ENCODE measurements at regions of chr1 and their contacts with region 1.

Region 1: GRCh38 chr1:75785983-75786853 is at the start of gene RABGGTB:
- DNase-seq: peak; percentile 91 to 97
- H3K4me3 ChIP-seq: peak within 1 kb of the TSS; percentile 78 to 95 (median 86)
- H3K27ac ChIP-seq: peak within 1 kb of the TSS; percentile 70; the same call in 1 of the 2 replicates
- H3K4me1 ChIP-seq: peaks cover 0 to 3% (median 2%) of the 10 kb centered on the region in 4 experiments; a peak in 2 of 7 replicates
- H3K27me3 ChIP-seq: no peaks in the 10 kb centered on the region
- CTCF ChIP-seq: no peak
- EP300 ChIP-seq: no peak
- POLR2A ChIP-seq: peak; percentile 99
- RAD21 ChIP-seq: peak; percentile 11 to 17; a peak in 2 of 4 replicates
- total RNA-seq, gene RABGGTB: 117 and 124 TPM in 2 replicates

Region 2: GRCh38 chr1:75615613-75616435 is 170.4 kb before region 1 on chr1:
- CTCF ChIA-PET with region 1: interaction called, 4 read pairs
- POLR2A ChIA-PET with region 1: interaction called, 17 read pairs
- DNase-seq: peak in 1 of 2 experiments; percentile 73
- H3K4me3 ChIP-seq: peak overlapping the region; percentile 70 to 80 (median 80)
- H3K27ac ChIP-seq: no peak overlapping the region
- H3K4me1 ChIP-seq: peaks cover 0 to 9% (median 0%) of the 10 kb centered on the region in 4 experiments; a peak in 2 of 7 replicates
- H3K27me3 ChIP-seq: peaks cover 0 to 46% (median 32%) of the 10 kb centered on the region in 4 experiments; a peak in 6 of 7 replicates
- CTCF ChIP-seq: no peak
- EP300 ChIP-seq: no peak; a peak in 1 of 3 replicates
- POLR2A ChIP-seq: no peak
- RAD21 ChIP-seq: no peak

Region 3: GRCh38 chr1:75672528-75673393 is 113.5 kb before region 1 on chr1:
- CTCF ChIA-PET with region 1: no interaction called
- POLR2A ChIA-PET with region 1: interaction called, 11 read pairs
- DNase-seq: peak in 1 of 2 experiments; percentile 58
- H3K4me3 ChIP-seq: 0 out of 8 replicates have a peak overlapping the region, but pooled peaks of 1 of the 4 experiments have one; percentile 4
- H3K27ac ChIP-seq: peak overlapping the region; percentile 21; the same call in 1 of the 2 replicates
- H3K4me1 ChIP-seq: peaks cover 2 to 11% (median 9%) of the 10 kb centered on the region in 4 experiments; a peak in 4 of 7 replicates
- H3K27me3 ChIP-seq: no peaks in the 10 kb centered on the region
- CTCF ChIP-seq: no peak
- EP300 ChIP-seq: no peak
- POLR2A ChIP-seq: no peak
- RAD21 ChIP-seq: no peak

Region 4: GRCh38 chr1:75707191-75707590 is 79.0 kb before region 1 on chr1:
- CTCF ChIA-PET with region 1: no interaction called
- POLR2A ChIA-PET with region 1: no interaction called
- DNase-seq: no peak
- H3K4me3 ChIP-seq: no peak overlapping the region
- H3K27ac ChIP-seq: no peak overlapping the region
- H3K4me1 ChIP-seq: no peaks in the 10 kb centered on the region
- H3K27me3 ChIP-seq: no peaks in the 10 kb centered on the region
- CTCF ChIP-seq: no peak
- EP300 ChIP-seq: no peak
- POLR2A ChIP-seq: no peak
- RAD21 ChIP-seq: no peak

Region 5: DNA sequence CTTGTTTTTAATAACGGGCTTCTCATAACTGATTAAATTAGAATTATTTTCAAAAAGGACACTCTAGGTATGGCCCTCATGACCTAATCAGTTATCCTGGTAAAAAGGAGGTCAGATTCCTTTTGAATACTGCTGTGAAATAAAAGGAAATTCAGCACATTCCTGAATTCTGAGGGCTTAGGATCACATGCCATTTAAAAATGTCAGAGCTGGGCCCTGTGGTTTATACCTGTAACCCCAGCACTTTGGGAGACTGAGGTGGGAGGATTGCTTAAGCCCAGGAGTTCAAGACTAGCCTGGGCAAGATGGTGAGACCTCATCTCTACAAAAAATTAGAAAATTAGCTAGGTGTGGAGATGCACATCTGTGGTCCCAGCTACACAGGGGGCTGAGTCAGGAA is 18.2 kb before region 1 on chr1:
- CTCF ChIA-PET with region 1: no interaction called
- POLR2A ChIA-PET with region 1: interaction called, 31 read pairs
- DNase-seq: no peak
- H3K4me3 ChIP-seq: no peak overlapping the region
- H3K27ac ChIP-seq: no peak overlapping the region
- H3K4me1 ChIP-seq: peaks cover 0 to 3% (median 1%) of the 10 kb centered on the region in 4 experiments; a peak in 2 of 7 replicates
- H3K27me3 ChIP-seq: no peaks in the 10 kb centered on the region
- CTCF ChIP-seq: no peak
- EP300 ChIP-seq: no peak
- POLR2A ChIP-seq: no peak
- RAD21 ChIP-seq: no peak

Region 6: GRCh38 chr1:75796376-75797272 is 10.4 kb after region 1 on chr1 and contains the start of gene MSH4:
- CTCF ChIA-PET with region 1: no interaction called
- POLR2A ChIA-PET with region 1: interaction called, 112 read pairs
- DNase-seq: peak in 1 of 2 experiments; percentile 66
- H3K4me3 ChIP-seq: no peak within 1 kb of the TSS
- H3K27ac ChIP-seq: no peak within 1 kb of the TSS
- H3K4me1 ChIP-seq: no peaks in the 10 kb centered on the region
- H3K27me3 ChIP-seq: no peaks in the 10 kb centered on the region
- CTCF ChIP-seq: no peak
- EP300 ChIP-seq: no peak
- POLR2A ChIP-seq: peak; percentile 70 to 90
- RAD21 ChIP-seq: no peak
- total RNA-seq, gene MSH4: 0.22 and 0.25 TPM in 2 replicates

Measured in H1 (cell line).